T-cell (primary cell): ENCODE measurements at regions of chr11 and their contacts with region 1.

Region 1: DNA sequence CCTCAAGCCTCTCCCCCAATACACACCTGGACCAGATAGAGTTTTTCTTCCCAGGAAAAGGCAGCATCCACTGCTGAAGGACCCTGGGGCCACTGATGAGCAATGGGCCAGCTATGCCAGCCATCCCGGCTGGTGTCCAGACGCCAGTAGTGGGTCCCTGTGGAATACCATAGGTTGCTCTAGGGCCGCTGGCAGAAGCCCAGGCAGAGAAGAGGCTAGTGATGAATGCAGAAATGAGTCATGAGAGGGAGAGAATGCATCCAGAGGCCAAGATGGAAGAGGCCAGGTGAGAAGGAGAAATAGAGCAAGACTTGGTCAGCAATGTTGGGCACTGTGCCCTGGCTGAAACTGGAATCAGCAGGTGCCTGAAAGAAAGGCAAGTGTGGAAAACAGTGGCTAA is 8.9 kb downstream of the HPX start:
- DNase-seq: no peak
- ATAC-seq: no peak
- H3K4me3 ChIP-seq: no peak overlapping the region
- H3K4me3 Mint-ChIP-seq: no peak overlapping the region
- H3K27ac ChIP-seq: no peak overlapping the region
- H3K27ac Mint-ChIP-seq: no peak overlapping the region
- H3K4me1 ChIP-seq: no peaks in the 10 kb centered on the region
- H3K4me1 Mint-ChIP-seq: peaks cover 0 to 23% (median 2%) of the 10 kb centered on the region in 3 donors
- H3K27me3 ChIP-seq: no peaks in the 10 kb centered on the region
- H3K27me3 Mint-ChIP-seq: no peaks in the 10 kb centered on the region

Region 2: DNA sequence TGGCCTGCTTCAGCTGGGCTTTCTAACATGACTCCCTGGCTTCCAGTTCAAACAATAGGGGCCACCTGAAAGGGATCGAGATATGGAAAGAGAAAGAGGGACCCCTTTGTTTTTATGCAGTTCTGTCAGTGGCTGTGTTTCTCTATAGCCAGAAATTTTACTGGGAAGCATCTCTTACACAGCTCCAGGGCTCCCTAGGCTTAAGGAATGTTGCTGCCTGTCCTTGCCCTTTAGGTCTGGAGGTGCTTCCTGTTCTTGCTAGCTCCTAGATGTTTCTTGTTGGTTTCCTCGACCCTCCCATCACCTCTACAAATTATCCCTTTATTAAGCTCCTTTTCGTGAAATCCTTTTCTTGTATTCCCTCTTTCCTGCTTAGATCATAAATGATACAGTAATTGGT is 379.5 kb before region 1 on chr11:
- CTCF ChIA-PET with region 1: no interaction called
- POLR2A ChIA-PET with region 1: no interaction called
- DNase-seq: no peak
- ATAC-seq: no peak
- H3K4me3 ChIP-seq: no peak overlapping the region
- H3K4me3 Mint-ChIP-seq: no peak overlapping the region
- H3K27ac ChIP-seq: no peak overlapping the region
- H3K27ac Mint-ChIP-seq: no peak overlapping the region
- H3K4me1 ChIP-seq: no peaks in the 10 kb centered on the region
- H3K4me1 Mint-ChIP-seq: no peaks in the 10 kb centered on the region
- H3K27me3 ChIP-seq: no peaks in the 10 kb centered on the region
- H3K27me3 Mint-ChIP-seq: peaks cover 30 to 31% of the 10 kb centered on the region in 2 donors

Region 3: DNA sequence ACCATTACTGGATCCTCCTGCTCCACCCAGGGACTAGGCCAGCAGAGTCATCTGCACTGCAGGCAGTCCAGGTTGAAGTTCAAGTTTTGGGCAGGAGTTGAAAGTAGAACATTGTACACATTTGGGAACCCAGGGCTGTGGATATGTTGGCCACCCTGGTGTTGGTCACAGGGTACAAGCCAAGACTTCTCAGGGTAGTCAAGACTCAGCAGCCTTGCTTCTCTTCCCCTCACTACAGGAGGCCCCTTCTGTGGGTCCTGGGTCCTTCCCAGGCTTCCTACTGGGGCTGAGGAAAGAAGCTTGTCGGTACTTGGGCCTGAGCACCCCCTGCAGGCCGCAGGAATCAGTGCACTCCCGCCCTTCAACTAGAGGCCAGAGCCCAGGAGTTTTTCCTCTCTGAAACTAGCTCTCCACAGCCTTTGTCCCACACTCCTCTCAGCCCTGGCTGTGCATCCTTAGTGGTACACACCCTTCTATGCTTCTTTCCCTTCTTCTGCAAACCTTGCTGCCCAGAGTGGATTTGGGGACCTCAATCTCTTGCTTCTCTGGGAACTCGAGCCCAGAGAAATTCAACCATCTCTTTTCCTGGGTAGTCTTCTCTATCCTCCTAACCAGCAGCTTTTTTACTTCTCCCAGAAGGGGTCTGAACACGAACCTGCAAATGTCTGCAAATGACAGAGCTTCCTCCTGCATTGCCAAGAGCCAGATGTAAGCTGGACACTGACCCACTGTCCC is 11.6 kb after region 1 on chr11:
- CTCF ChIA-PET with region 1: interaction called, 4 to 13 read pairs
- POLR2A ChIA-PET with region 1: no interaction called
- DNase-seq: peak in 33 of 35 experiments; percentile 20 to 79 (median 48)
- ATAC-seq: peak; percentile 83 to 92 (median 84)
- H3K4me3 ChIP-seq: no peak overlapping the region
- H3K4me3 Mint-ChIP-seq: no peak overlapping the region
- H3K27ac ChIP-seq: no peak overlapping the region
- H3K27ac Mint-ChIP-seq: no peak overlapping the region
- H3K4me1 ChIP-seq: peaks cover 13 to 19% of the 10 kb centered on the region in 2 experiments
- H3K4me1 Mint-ChIP-seq: peaks cover 0 to 3% (median 2%) of the 10 kb centered on the region in 3 donors
- H3K27me3 ChIP-seq: no peaks in the 10 kb centered on the region
- H3K27me3 Mint-ChIP-seq: no peaks in the 10 kb centered on the region

Region 4: GRCh38 chr11:6586434-6587359 is 154.8 kb after region 1 on chr11:
- CTCF ChIA-PET with region 1: no interaction called
- POLR2A ChIA-PET with region 1: no interaction called
- DNase-seq: no peak
- ATAC-seq: no peak
- H3K4me3 ChIP-seq: no peak overlapping the region
- H3K4me3 Mint-ChIP-seq: no peak overlapping the region
- H3K27ac ChIP-seq: no peak overlapping the region
- H3K27ac Mint-ChIP-seq: no peak overlapping the region
- H3K4me1 ChIP-seq: no peaks in the 10 kb centered on the region
- H3K4me1 Mint-ChIP-seq: no peaks in the 10 kb centered on the region
- H3K27me3 ChIP-seq: no peaks in the 10 kb centered on the region
- H3K27me3 Mint-ChIP-seq: no peaks in the 10 kb centered on the region